ENCODE measurements at regions of chr2 and their contacts with region 1.

Region 1: DNA sequence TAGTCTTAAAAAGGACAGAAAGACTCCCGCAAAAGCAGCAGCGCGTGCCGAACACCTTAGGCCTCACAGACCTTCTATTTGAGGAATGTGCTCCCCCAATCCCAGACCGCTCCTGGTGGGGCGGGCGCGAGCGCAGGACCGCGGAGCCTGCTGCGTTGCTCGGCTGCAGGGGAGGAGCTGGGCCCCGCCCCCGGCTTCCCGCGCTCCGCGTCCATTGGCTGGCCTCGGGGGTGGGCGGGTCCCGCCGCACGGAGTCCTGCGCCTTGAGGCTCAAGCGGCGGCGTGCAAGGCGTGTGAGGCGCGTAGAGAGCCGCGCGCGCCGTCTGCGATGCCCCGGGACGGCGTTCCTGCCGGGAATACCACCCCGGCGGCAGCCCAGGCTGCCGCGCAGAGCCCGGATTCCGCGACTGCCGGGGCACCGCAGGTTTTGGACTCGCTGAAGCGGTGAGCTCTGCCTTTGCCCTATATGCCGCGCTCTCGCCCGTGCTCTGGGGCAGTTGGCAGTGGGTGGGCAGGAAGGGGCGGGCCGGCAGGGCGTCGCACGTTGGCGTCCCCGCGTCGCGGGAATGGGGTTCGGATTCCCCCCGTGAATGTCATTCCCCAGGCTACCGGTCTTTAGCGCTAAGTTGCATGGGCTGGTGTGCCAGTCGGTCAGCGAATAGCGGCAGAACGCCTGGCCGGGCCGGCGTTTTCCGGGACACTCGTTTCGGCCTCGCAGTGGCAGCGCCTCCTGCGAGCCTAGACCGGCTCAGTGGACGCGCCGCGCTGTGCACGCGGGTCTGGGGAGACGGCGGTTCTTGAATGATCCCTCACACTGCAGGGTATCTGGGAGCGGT is 49.6 kb upstream of the PAIP2B start:
- DNase-seq: peak; percentile 91
- H3K4me3 ChIP-seq: peak overlapping the region; percentile 64
- H3K27ac ChIP-seq: peak overlapping the region; percentile 34
- H3K4me1 ChIP-seq: no peaks in the 10 kb centered on the region
- H3K27me3 ChIP-seq: no peaks in the 10 kb centered on the region
- CTCF ChIP-seq: no peak

Region 2: GRCh38 chr2:71226965-71227560 is 49.5 kb before region 1 on chr2 and contains the start of gene PAIP2B:
- intact Hi-C with region 1: loop called (anchors 5 kb)
- DNase-seq: peak; percentile 99
- H3K4me3 ChIP-seq: peak within 1 kb of the TSS; percentile 87
- H3K27ac ChIP-seq: peak within 1 kb of the TSS; percentile 60
- H3K4me1 ChIP-seq: no peaks in the 10 kb centered on the region
- H3K27me3 ChIP-seq: no peaks in the 10 kb centered on the region
- CTCF ChIP-seq: no peak
- total RNA-seq, gene PAIP2B: 7.1 to 8.0 TPM